ENCODE measurements at regions of chr2 and their contacts with region 1.

Region 1: DNA sequence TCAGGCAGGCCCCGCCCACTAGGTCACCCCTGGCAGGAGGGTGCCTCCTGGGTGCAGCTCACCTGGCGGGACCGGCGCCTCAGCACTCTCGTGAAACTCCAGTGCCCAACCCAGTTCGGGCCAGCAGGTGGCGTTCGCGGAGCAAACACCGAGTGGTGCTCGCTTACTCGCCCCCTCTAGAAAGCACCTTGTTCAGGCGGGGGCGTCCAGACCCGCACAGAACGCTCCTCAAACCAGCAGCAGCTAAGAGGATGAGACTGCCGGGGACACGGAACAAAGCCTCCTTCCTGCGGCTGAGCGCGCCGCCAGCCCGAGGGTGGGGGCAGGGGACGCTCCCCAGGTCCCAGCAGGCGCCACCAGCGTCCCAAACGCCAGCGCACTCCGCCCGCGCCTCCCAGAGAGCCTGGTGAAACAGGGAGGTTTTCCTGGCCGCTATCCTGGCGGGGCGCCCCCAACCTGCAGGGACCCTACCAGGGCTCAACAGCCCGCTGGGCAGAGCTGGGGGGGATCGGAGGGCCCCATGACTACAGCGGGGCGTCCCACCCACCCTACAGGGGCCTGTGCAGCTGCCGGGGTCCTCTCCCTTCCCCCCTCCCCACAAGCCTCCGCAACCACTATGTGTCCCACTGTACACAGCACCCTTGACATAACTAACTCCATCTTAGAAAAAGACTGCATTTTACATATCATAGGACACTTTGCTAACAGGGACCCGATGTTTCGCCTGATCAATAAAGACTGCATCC is 44.7 kb downstream of the MRPS5 start:
- DNase-seq: peak; percentile 83 to 95 (median 90)
- ATAC-seq: peak; percentile 72 to 80
- H3K4me3 Mint-ChIP-seq: peak overlapping the region; percentile 80 to 91 (median 88)
- H3K27ac Mint-ChIP-seq: peak overlapping the region; percentile 84 to 99 (median 96)
- H3K4me1 Mint-ChIP-seq: peaks cover 33 to 80% (median 75%) of the 10 kb centered on the region in 4 donors
- H3K27me3 Mint-ChIP-seq: no peaks in the 10 kb centered on the region

Region 2: GRCh38 chr2:94890234-94890633 is 186.7 kb before region 1 on chr2:
- POLR2A ChIA-PET with region 1: no interaction called
- DNase-seq: no peak
- ATAC-seq: no peak
- H3K4me3 Mint-ChIP-seq: no peak overlapping the region
- H3K27ac Mint-ChIP-seq: no peak overlapping the region
- H3K4me1 Mint-ChIP-seq: no peaks in the 10 kb centered on the region
- H3K27me3 Mint-ChIP-seq: peaks cover 7 to 32% (median 18%) of the 10 kb centered on the region in 5 donors

Region 3: GRCh38 chr2:95022309-95023221 is 54.4 kb before region 1 on chr2:
- POLR2A ChIA-PET with region 1: interaction called, 944 read pairs
- DNase-seq: peak; percentile 72 to 88 (median 80)
- ATAC-seq: peak; percentile 50 to 66
- H3K4me3 Mint-ChIP-seq: peak overlapping the region; percentile 81 to 100 (median 84)
- H3K27ac Mint-ChIP-seq: peak overlapping the region; percentile 47 to 99 (median 92)
- H3K4me1 Mint-ChIP-seq: peaks cover 36 to 56% (median 48%) of the 10 kb centered on the region in 4 donors
- H3K27me3 Mint-ChIP-seq: peaks cover 0 to 11% (median 0%) of the 10 kb centered on the region in 5 donors

Region 4: DNA sequence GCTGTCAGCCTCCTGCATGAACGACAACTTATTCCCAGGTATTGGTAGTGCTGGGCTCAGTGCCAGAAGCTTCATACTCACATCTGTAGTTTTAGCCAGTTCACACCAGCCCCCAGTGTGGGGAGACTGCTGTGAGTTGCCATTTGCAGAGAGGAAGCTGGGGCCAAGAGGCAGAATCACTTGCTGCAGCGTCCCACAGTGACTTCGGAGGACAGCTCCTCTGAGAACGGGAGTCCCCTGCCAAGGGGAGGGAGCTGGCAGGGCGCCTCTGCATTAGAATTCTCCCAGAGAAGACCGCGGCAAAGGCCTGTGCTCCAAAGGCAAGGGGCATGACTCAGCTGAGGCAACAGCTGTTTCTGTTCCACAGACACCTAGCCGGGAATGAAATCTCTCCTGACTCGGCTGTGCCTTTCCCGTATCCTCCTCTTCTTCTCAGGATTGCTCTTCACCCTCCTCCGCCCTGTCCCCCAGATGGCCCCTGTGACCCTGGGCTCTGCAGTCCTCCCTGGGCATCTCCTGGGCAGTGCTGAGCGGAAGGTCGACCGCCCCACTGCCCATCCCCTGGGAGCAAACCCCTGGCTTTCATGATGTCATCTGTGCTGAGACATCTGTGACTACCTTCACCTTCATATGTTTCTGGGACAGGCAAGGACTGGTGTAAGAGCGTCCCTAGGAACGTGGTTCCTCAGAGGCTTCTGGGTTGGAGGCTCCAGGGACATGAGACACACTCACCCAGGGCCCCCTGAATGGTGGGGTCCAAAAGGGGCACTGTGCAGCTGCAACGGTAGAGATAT is 33.5 kb before region 1 on chr2:
- POLR2A ChIA-PET with region 1: interaction called, 537 read pairs
- DNase-seq: peak in 1 of 10 donors; percentile 28
- ATAC-seq: peak; percentile 46 to 48
- H3K4me3 Mint-ChIP-seq: peak overlapping the region in 6 of 10 donors; percentile 23 to 69 (median 42)
- H3K27ac Mint-ChIP-seq: peak overlapping the region; percentile 66 to 92 (median 81)
- H3K4me1 Mint-ChIP-seq: peaks cover 49 to 98% (median 89%) of the 10 kb centered on the region in 4 donors
- H3K27me3 Mint-ChIP-seq: no peaks in the 10 kb centered on the region

Region 5: GRCh38 chr2:95121407-95122196 is 44.6 kb after region 1 on chr2 and contains the start of gene MRPS5:
- POLR2A ChIA-PET with region 1: interaction called, 20 read pairs
- DNase-seq: peak; percentile 65 to 87 (median 79)
- ATAC-seq: peak; percentile 91
- H3K4me3 Mint-ChIP-seq: peak within 1 kb of the TSS; percentile 89 to 98 (median 96)
- H3K27ac Mint-ChIP-seq: peak within 1 kb of the TSS; percentile 92 to 97 (median 95)
- H3K4me1 Mint-ChIP-seq: peaks cover 16 to 53% (median 48%) of the 10 kb centered on the region in 4 donors
- H3K27me3 Mint-ChIP-seq: peaks cover 0 to 2% (median 0%) of the 10 kb centered on the region in 5 donors
- polyA plus RNA-seq, gene MRPS5: 37.2 to 54.6 (median 43.0) TPM

Region 6: DNA sequence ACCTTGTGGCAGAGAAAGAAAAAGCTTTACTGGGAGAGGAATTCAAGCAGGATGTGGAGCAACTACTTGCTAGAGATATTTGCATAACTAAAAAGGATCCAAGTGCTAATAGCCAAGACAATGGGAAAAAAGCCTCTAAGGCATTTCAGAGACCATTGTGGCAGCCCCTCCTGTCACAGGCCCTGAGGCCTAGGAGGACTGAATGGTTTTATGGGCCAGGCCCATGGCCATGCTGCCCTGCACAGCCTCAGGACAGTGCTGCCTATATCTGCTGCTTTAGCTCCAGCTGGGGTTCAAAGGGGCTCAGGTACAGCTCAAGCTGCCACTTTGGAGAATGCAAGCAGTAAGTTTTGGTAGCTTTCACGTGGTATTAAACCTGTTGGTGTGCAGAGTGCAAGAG is 61.7 kb after region 1 on chr2:
- POLR2A ChIA-PET with region 1: no interaction called
- DNase-seq: no peak
- ATAC-seq: no peak
- H3K4me3 Mint-ChIP-seq: no peak overlapping the region
- H3K27ac Mint-ChIP-seq: no peak overlapping the region
- H3K4me1 Mint-ChIP-seq: no peaks in the 10 kb centered on the region
- H3K27me3 Mint-ChIP-seq: no peaks in the 10 kb centered on the region

Region 7: DNA sequence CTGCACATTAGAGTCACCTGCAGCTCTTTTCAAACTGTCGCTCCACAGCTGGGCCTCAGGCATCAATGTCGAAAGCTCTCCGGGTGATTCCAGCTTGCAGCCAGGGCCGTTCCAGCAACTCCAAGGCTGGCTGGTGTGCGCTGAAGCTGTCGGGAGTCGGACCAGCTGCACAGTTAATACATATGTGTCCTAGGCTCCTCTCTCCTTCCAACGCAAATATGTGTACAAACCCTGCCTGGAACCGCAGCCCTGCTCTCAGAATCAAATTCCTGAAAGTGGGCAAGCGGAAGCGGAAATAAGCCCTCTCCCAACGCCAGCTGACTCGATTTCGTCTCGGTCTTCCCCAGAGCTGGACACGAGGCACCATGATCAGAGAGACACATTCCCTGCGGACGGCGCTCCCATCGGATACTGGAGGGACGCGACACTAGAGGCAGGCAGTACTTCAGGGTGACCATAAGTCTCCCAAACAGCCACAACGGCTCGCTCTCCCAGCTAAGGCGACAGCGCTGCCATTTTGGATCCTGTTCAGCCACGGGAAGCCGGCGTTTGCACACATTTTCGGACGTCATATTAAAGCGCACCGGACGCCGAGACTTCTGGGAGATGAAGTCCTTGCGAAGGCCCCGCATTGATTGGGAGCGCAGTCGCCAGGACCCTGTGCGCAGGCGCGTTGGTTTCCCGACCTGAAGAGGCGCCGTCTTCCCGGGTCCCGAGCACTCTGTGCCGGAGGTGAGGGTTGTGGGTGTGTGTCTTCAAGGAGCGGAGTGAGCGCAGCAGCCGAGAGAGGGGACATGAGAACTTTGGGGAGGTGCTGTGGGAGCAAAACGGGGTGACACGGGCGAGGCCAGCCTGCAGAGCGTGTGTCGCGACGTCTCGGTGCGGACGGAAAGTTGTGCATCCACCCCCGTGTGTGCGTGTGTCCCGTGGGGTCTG is 88.4 kb after region 1 on chr2 and contains the start of gene ZNF2:
- POLR2A ChIA-PET with region 1: interaction called, 15 read pairs
- DNase-seq: peak; percentile 95 to 99 (median 96)
- ATAC-seq: peak; percentile 93 to 95
- H3K4me3 Mint-ChIP-seq: peak within 1 kb of the TSS; percentile 97 to 100 (median 100)
- H3K27ac Mint-ChIP-seq: peak within 1 kb of the TSS; percentile 97 to 99 (median 98)
- H3K4me1 Mint-ChIP-seq: peaks cover 13 to 53% (median 39%) of the 10 kb centered on the region in 4 donors
- H3K27me3 Mint-ChIP-seq: no peaks in the 10 kb centered on the region
- polyA plus RNA-seq, gene ZNF2: 2.5 to 4.2 (median 3.6) TPM

Measured in naive thymus-derived CD8-positive, alpha-beta T cell (primary cell).